HepG2 (cell line): ENCODE measurements at regions of chr5 and their contacts with region 1.

Region 1: DNA sequence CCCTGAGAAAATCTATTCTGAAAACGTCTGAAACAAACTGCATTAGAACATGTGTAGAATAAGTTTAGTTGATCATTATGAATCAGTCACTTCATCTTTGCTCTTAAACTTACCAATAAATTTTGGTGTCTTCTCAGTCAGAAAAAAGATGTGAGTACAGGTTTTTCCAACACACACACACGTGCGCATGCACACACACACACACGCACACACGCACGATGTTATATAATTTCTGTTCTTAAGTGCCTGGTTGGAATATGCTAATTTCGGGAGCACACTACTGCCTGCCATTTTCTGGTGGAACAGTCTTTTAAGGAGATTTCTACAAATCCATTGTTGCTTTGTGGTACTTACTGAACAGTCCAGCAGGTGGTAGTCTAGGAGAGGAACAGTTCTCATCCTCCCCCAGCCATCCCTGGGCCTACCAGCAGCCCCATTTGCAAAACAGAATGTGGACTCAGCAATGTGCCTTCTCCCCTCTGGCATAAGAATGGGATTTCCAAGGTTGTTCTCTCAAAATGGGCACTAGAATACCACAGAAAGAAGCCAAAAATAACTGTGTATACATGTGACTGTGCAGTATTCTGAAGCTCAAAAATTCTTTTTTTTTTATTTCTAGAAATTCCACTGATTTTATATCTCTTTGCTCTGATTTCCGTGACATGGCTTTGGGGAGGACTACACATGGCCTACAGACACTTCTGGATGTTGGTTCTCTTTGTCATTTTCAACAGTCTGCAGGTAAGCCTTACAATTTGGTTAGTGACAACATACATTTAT is 281.3 kb downstream of the ARRDC3 start:
- DNase-seq: peak; percentile 64
- ATAC-seq: peak; percentile 99
- H3K4me3 ChIP-seq: no peak overlapping the region
- H3K27ac ChIP-seq: no peak overlapping the region
- H3K4me1 ChIP-seq: peaks cover 11% of the 10 kb centered on the region
- H3K27me3 ChIP-seq: no peaks in the 10 kb centered on the region
- CTCF ChIP-seq: peak; percentile 85
- EP300 ChIP-seq: no peak
- POLR2A ChIP-seq: no peak
- RAD21 ChIP-seq: peak; percentile 87

Region 2: GRCh38 chr5:91219803-91220371 is 118.1 kb after region 1 on chr5:
- CTCF ChIA-PET with region 1: no interaction called
- POLR2A ChIA-PET with region 1: no interaction called
- in situ Hi-C with region 1: no loop called
- intact Hi-C with region 1: loop called (anchors 1 kb)
- DNase-seq: no peak
- ATAC-seq: peak; percentile 53
- H3K4me3 ChIP-seq: no peak overlapping the region
- H3K27ac ChIP-seq: no peak overlapping the region
- H3K4me1 ChIP-seq: no peaks in the 10 kb centered on the region; the same call in 1 of the 2 replicates
- H3K27me3 ChIP-seq: no peaks in the 10 kb centered on the region
- CTCF ChIP-seq: peak; percentile 33; the same call in 1 of the 2 replicates
- EP300 ChIP-seq: no peak
- POLR2A ChIP-seq: no peak
- RAD21 ChIP-seq: no peak

Region 3: DNA sequence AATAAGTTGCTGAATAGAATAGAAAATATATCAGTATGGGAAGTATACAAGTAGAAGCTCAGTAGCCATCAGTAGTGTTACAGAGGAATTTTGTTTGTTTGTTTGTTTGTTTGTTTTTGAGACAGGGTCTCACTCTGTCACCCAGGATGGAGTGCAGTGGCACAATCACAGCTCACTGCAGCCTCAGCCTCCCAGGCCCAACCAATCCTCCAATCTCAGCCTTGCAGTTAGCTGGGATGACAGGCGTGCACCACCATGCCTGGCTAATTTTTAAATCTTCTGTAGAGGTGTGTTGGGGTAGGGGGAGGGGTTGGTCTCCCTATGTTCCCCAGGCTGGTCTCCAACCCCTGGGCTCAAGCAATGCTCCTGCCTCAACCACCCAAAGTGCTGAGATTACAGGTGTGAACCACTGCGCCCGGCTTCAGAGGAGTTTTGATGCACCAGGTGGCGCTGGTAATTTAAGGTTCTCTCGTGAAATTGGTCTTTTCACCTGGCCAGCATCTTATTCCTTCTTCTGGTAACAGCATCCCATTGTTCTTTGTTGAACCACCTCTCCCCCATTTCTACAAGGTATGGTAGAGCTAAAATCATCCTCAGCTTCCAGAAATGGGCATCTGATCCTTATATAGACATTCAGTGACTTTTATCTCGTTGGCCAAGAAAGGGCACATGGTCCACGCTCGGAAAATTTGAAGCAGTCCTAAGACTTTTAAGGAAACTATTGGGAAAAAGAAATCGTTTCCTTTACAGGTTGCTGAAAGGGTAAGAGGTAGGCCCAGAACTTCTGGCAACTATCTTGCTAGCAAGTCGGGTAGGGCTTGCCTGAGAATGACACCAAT is 124.3 kb after region 1 on chr5:
- CTCF ChIA-PET with region 1: interaction called, 3 read pairs
- POLR2A ChIA-PET with region 1: no interaction called
- in situ Hi-C with region 1: no loop called
- intact Hi-C with region 1: loop called (anchors 1 kb)
- DNase-seq: peak; percentile 24
- ATAC-seq: peak; percentile 72
- H3K4me3 ChIP-seq: no peak overlapping the region
- H3K27ac ChIP-seq: no peak overlapping the region
- H3K4me1 ChIP-seq: no peaks in the 10 kb centered on the region; the same call in 1 of the 2 replicates
- H3K27me3 ChIP-seq: no peaks in the 10 kb centered on the region
- CTCF ChIP-seq: peak; percentile 77
- EP300 ChIP-seq: no peak
- POLR2A ChIP-seq: no peak
- RAD21 ChIP-seq: peak; percentile 79

Region 4: DNA sequence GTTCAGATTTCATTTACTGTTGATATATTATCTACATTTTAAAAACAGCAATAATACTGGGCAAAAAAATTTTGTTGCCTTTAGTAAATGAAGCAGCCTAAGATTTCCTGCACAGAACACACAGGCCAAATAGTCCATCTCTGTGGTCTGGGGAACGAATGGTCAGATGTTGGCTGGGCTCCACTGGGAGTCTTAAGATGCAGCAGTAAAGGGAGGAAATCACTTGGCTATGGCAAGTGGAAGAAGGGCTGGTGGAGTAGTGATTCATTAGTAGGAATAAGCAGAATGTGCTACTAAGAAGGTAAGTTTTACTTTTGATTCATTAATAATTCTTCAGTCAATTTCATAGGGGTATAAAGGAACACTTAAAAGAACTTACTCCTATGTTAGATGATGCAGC is 372.4 kb after region 1 on chr5:
- CTCF ChIA-PET with region 1: no interaction called
- POLR2A ChIA-PET with region 1: no interaction called
- in situ Hi-C with region 1: no loop called
- intact Hi-C with region 1: no loop called
- DNase-seq: no peak
- ATAC-seq: no peak
- H3K4me3 ChIP-seq: no peak overlapping the region
- H3K27ac ChIP-seq: no peak overlapping the region
- H3K4me1 ChIP-seq: no peaks in the 10 kb centered on the region
- H3K27me3 ChIP-seq: no peaks in the 10 kb centered on the region
- CTCF ChIP-seq: no peak
- EP300 ChIP-seq: no peak
- POLR2A ChIP-seq: no peak
- RAD21 ChIP-seq: no peak